ENCODE measurements at regions of chr17 and their contacts with region 1.

Region 1: GRCh38 chr17:31825961-31826691 is 32.9 kb downstream of the COPRS start:
- DNase-seq: peak in 1 of 2 experiments; percentile 58
- H3K4me3 ChIP-seq: no peak overlapping the region
- H3K27ac ChIP-seq: no peak overlapping the region
- H3K4me1 ChIP-seq: no peaks in the 10 kb centered on the region
- H3K27me3 ChIP-seq: no peaks in the 10 kb centered on the region
- CTCF ChIP-seq: no peak

Region 2: GRCh38 chr17:31645351-31645750 is 180.8 kb before region 1 on chr17:
- CTCF ChIA-PET with region 1: no interaction called
- POLR2A ChIA-PET with region 1: no interaction called
- intact Hi-C with region 1: no loop called
- DNase-seq: no peak
- H3K4me3 ChIP-seq: no peak overlapping the region
- H3K27ac ChIP-seq: no peak overlapping the region
- H3K4me1 ChIP-seq: no peaks in the 10 kb centered on the region
- H3K27me3 ChIP-seq: no peaks in the 10 kb centered on the region
- CTCF ChIP-seq: no peak

Region 3: DNA sequence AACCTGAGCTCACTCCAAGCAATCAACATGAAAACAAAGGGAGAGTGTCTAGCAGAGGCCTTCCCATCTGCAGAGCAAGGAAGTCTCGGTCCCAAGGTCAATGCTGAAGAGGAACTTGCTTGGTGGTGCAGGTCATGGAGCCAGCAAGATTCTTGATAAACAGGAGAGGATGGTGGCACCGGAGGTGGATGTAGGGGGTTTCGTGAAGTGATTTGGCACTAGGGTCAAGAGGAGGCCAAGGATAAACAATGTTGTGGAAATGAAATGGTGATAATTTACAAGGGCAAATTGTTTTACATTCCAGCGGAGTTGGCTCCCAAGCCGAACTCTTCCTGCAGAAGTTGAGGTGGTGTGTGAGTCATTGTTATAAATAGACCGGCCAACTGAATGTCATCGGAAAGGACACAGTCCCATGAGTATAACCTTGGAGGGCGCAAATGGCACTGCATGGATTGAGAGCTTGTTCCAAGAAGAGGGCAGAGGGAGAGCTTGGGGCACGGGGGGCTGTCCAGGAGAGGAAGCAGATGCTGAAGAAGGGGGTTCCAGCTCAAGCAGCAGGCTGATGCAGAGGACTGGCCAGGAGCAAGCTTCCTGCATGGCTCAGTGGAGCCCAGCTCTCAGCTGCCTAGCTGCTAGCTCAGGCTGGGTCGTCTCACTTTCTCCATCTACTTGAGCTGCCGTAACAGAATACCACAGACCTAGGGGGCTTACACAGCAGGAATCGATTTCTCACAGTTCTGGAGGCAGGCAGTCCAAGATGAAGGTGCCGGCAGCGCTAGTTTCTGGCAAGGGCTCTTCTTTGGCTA is 103.7 kb before region 1 on chr17:
- CTCF ChIA-PET with region 1: no interaction called
- POLR2A ChIA-PET with region 1: no interaction called
- intact Hi-C with region 1: loop called (anchors 10 kb)
- DNase-seq: no peak
- H3K4me3 ChIP-seq: no peak overlapping the region
- H3K27ac ChIP-seq: no peak overlapping the region
- H3K4me1 ChIP-seq: peaks cover 12% of the 10 kb centered on the region; the same call in 1 of the 2 replicates
- H3K27me3 ChIP-seq: no peaks in the 10 kb centered on the region
- CTCF ChIP-seq: no peak

Measured in PC-9 (cell line).